H1 (cell line): ENCODE measurements at regions of chr11 and their contacts with region 1.

Region 1: DNA sequence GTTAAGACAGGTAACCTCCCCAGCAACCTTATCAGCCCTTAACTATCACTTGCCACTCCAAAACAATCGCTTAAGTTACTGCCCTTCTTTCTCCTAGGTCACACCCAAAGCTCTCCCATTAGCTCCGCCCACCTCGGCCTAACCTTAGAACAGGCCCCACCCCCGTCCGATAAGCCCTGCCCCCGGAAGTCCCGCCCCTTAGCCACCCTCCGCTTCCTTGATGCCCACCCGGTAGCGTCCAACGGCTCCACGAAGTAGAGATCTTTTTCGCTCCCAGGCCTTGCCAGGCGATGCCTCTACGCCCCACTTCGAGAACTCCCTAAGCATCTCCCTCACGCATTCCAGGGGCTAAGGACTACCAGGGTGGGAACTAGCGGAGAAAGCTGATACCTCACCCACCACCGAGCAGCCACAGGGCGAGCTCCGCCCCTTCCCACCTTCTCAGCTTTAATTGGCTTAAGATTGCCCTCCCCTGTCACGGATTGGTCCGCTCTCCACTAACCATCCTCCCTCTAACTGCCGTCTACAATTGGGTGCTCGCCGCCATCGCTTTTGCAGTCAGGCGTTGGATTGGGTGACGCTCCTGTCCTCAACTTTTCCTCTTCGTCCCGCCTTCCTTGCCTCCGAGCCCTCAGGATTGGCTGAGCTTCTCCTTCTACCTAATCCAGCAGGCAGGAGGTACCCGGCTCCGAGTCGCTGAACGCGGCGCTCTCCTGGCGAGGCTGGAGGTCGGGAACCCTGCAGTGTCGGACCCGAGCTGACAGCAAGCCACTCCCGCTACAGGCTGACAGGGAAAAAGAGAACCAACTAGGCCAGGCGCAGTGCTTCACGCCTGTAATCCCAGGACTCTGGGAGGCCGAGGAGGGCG is at the start of gene ZBTB3:
- DNase-seq: peak; percentile 97 to 99
- H3K4me3 ChIP-seq: peak within 1 kb of the TSS; percentile 74 to 89 (median 82)
- H3K27ac ChIP-seq: peak within 1 kb of the TSS; percentile 86
- H3K4me1 ChIP-seq: peaks cover 4 to 9% (median 6%) of the 10 kb centered on the region in 4 experiments
- H3K27me3 ChIP-seq: no peaks in the 10 kb centered on the region
- CTCF ChIP-seq: no peak
- EP300 ChIP-seq: no peak
- POLR2A ChIP-seq: peak; percentile 37 to 79
- RAD21 ChIP-seq: 0 out of 4 replicates have a peak, but pooled peaks of 1 of the 2 experiments have one; percentile 6
- total RNA-seq, gene ZBTB3: 76.5 and 76.9 TPM in 2 replicates

Region 2: DNA sequence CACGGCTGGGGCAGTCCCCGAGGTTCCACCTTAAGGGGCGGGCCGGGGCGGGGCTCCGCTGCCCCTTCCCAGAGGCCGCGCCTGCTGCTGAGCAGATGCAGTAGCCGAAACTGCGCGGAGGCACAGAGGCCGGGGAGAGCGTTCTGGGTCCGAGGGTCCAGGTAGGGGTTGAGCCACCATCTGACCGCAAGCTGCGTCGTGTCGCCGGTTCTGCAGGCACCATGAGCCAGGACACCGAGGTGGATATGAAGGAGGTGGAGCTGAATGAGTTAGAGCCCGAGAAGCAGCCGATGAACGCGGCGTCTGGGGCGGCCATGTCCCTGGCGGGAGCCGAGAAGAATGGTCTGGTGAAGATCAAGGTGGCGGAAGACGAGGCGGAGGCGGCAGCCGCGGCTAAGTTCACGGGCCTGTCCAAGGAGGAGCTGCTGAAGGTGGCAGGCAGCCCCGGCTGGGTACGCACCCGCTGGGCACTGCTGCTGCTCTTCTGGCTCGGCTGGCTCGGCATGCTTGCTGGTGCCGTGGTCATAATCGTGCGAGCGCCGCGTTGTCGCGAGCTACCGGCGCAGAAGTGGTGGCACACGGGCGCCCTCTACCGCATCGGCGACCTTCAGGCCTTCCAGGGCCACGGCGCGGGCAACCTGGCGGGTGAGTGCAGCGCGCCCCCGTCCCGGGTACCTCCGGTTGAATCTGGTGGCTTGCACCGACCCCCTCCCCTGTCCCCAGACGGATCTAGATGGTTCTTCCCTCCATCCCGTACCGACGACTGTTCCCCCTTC is 127.0 kb after region 1 on chr11 and contains the start of gene SLC3A2:
- CTCF ChIA-PET with region 1: no interaction called
- POLR2A ChIA-PET with region 1: interaction called, 12 read pairs
- DNase-seq: peak; percentile 56 to 88
- H3K4me3 ChIP-seq: peak within 1 kb of the TSS; percentile 67 to 97 (median 88)
- H3K27ac ChIP-seq: peak within 1 kb of the TSS; percentile 98
- H3K4me1 ChIP-seq: peaks cover 0 to 30% (median 12%) of the 10 kb centered on the region in 4 experiments; a peak in 5 of 7 replicates
- H3K27me3 ChIP-seq: no peaks in the 10 kb centered on the region
- CTCF ChIP-seq: peak; percentile 60 to 82 (median 71)
- EP300 ChIP-seq: no peak
- POLR2A ChIP-seq: peak; percentile 97 to 99
- RAD21 ChIP-seq: peak; percentile 39 to 55
- total RNA-seq, gene SLC3A2: 393 and 410 TPM in 2 replicates

Region 3: DNA sequence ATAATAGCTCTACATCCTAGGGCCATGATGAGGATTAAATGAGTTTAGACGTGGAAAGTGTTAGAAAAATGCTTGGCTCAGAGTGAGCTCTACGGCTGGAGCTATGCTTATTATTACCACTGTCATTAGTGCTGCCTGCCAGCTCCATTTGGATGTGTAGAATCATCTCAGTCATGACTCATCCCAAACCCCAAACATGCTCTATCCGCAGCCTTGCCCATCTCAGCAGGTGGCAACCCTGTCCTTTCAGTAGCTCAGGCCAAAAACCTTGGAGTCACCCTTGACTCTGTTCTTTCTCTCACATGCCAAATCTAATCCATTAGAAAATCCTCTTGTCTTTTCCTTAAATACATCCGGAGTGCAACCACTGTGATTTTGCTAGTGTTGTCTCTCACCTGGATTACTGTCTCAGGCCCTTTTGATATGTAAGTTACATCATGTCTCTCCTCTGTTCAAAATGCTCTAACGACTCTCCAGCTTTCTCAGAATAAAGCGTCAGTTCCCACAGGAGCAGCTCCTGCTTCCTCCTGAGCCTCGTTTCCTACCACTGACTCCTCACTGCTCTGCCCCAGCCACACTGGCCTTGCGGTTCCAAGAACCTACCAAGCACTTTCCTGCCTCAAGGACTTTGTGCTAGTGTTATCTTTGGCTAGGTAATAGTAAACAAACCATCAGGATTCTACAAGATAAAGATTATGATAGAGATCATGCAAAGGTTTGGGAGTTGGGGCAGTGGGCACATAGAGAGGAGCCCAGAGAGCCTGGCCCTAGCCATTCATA is 177.7 kb after region 1 on chr11:
- CTCF ChIA-PET with region 1: no interaction called
- POLR2A ChIA-PET with region 1: no interaction called
- DNase-seq: no peak
- H3K4me3 ChIP-seq: no peak overlapping the region
- H3K27ac ChIP-seq: no peak overlapping the region
- H3K4me1 ChIP-seq: peaks cover 6 to 14% (median 9%) of the 10 kb centered on the region in 4 experiments; a peak in 5 of 7 replicates
- H3K27me3 ChIP-seq: peaks cover 10 to 26% (median 21%) of the 10 kb centered on the region in 4 experiments
- CTCF ChIP-seq: no peak
- EP300 ChIP-seq: no peak
- POLR2A ChIP-seq: no peak
- RAD21 ChIP-seq: no peak